Mammary epithelial cell (primary cell): ENCODE measurements at regions of chr13 and their contacts with region 1.

Region 1: GRCh38 chr13:35914662-35915061 is 216.5 kb downstream of the DCLK1 start:
- DNase-seq: no peak
- H3K4me3 ChIP-seq: no peak overlapping the region
- H3K27ac ChIP-seq: no peak overlapping the region
- H3K4me1 ChIP-seq: no peaks in the 10 kb centered on the region
- H3K27me3 ChIP-seq: no peaks in the 10 kb centered on the region
- CTCF ChIP-seq: no peak

Region 2: DNA sequence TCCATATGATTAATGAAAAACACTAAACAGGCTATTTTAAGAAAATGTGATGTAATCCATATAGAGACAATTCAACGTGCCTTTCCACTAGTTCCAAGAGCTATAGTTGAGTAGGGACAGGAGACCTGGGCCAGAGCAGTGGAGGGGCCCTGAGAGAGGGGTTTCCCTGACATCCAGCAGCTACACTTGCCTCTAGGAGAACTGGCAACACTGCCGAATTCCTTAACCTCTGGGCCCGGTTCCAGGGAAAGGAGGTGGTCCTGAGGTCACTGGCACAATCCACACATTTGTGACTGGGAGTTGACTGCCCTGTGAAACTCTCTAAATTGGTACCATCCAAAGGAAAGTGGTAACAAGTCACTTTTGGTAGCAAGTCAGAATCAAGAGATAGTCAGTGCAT is 47.9 kb before region 1 on chr13:
- CTCF ChIA-PET with region 1: no interaction called
- dilution Hi-C with region 1: no loop called
- in situ Hi-C with region 1: no loop called
- intact Hi-C with region 1: no loop called
- DNase-seq: no peak
- H3K4me3 ChIP-seq: no peak overlapping the region
- H3K27ac ChIP-seq: no peak overlapping the region
- H3K4me1 ChIP-seq: no peaks in the 10 kb centered on the region
- H3K27me3 ChIP-seq: no peaks in the 10 kb centered on the region
- CTCF ChIP-seq: no peak

Region 3: GRCh38 chr13:35903075-35903474 is 11.6 kb before region 1 on chr13:
- CTCF ChIA-PET with region 1: interaction called, 20 read pairs
- dilution Hi-C with region 1: no loop called
- in situ Hi-C with region 1: no loop called
- intact Hi-C with region 1: no loop called
- DNase-seq: no peak
- H3K4me3 ChIP-seq: no peak overlapping the region
- H3K27ac ChIP-seq: no peak overlapping the region
- H3K4me1 ChIP-seq: no peaks in the 10 kb centered on the region
- H3K27me3 ChIP-seq: no peaks in the 10 kb centered on the region
- CTCF ChIP-seq: no peak